ENCODE measurements at regions of chr14 and their contacts with region 1.

Region 1: DNA sequence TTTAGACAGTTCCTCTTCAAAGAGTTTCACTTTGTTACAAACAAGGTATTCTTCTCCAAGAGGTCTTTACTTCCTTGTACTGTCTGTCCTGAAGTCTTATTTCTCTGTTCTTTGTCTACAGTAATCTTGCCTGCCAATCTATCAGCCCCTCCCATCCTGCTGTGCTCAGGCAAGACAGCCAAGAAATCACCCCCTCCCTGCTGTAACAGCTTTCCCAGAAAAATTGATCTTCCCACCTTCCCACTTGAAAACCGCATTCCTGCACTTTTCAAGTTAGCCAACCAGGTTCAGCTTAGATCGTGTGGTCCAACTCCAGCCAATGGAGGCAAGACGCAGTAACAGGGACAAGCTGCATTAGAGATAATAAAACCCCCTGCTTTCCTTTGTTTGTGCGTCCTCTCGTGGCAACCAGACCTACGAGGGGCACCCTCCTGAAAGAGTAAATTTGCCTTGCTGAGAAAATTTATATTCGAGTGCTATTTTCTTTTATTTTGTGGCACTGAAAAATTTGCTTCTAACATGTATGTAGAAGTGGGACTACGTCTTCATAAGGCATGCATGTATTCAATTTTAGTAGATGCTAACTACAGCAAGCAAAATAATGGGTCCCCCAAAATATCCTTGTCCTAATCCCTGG is 46.5 kb upstream of the ESR2 start:
- DNase-seq: no peak
- H3K4me3 ChIP-seq: no peak overlapping the region
- CTCF ChIP-seq: no peak
- POLR2A ChIP-seq: no peak

Region 2: DNA sequence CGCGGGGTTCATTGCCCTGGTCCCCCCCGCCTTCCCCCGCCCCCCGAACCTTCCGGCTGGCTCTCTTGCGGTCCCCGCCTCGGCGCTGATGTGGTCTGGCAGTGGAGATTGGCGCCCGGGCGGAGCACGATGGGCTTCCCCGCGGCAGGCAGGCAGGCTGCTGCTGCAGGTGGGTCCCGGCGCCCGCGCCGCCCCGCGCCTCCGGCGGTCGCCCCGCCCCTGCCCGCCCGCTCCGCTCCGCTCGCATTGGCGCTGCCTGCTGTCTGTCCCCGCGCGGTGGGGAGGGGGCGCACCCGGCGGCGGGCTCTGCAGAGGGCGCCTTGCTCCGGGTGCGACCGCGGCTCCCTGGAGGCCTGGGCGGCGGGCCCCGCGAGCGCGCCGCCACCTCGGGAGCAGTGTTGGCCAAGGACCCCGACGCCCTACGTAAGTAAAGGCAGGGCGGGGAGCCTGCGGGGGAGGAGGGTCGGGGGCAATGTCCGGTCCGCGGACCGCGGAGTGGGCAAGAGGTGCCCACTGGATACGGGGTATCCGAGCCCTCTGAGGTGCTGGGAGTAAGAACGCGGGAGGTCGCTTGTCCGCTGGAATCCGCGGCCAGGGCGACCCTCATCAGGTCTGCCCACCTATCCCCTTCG is 124.6 kb after region 1 on chr14 and contains the start of gene AKAP5:
- intact Hi-C with region 1: no loop called
- DNase-seq: peak in 1 of 2 donors; percentile 89
- H3K4me3 ChIP-seq: peak within 1 kb of the TSS; percentile 59
- CTCF ChIP-seq: no peak
- POLR2A ChIP-seq: no peak
- total RNA-seq, gene AKAP5: 0.17 to 0.29 (median 0.21) TPM in 3 of 4 donors, not detected in the other

Region 3: DNA sequence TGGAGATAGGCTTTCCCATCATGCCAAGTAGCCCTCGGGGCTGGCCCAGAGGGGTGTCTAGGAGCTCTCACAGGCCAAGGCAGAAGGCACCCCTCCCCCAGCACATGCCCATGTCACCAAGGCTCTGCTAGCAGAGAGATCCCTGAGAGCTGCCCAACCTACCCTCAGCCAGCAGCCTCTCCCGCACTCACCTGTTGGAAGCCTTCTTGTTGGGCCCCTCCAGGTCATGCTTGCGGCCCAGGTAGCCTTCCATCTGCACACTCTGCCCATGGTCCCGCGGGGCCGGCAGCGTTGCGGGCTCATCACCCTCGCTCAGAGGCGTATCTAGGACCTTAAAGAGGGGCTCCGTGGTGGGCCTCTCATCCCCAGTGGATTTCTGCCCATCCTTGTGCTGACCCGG is 412.7 kb after region 1 on chr14:
- intact Hi-C with region 1: loop called (anchors 5 kb)
- DNase-seq: no peak
- H3K4me3 ChIP-seq: no peak overlapping the region
- CTCF ChIP-seq: no peak
- POLR2A ChIP-seq: no peak